ENCODE measurements at regions of chr6 and their contacts with region 1.

Region 1: GRCh38 chr6:149717588-149718458 is at the start of gene LATS1:
- DNase-seq: peak; percentile 94
- H3K4me3 Mint-ChIP-seq: peak within 1 kb of the TSS; percentile 90
- H3K27ac Mint-ChIP-seq: peak within 1 kb of the TSS; percentile 96
- H3K4me1 Mint-ChIP-seq: peaks cover 36% of the 10 kb centered on the region
- H3K27me3 Mint-ChIP-seq: no peaks in the 10 kb centered on the region
- total RNA-seq, gene LATS1: 34.9 to 37.3 TPM

Region 2: GRCh38 chr6:149701714-149702113 is 16.1 kb before region 1 on chr6:
- CTCF ChIA-PET with region 1: interaction called, 10 read pairs
- POLR2A ChIA-PET with region 1: interaction called, 3 read pairs
- DNase-seq: no peak
- H3K4me3 Mint-ChIP-seq: no peak overlapping the region
- H3K27ac Mint-ChIP-seq: no peak overlapping the region
- H3K4me1 Mint-ChIP-seq: peaks cover 29% of the 10 kb centered on the region
- H3K27me3 Mint-ChIP-seq: no peaks in the 10 kb centered on the region

Region 3: GRCh38 chr6:150046943-150047342 is 329.1 kb after region 1 on chr6:
- CTCF ChIA-PET with region 1: no interaction called
- POLR2A ChIA-PET with region 1: no interaction called
- DNase-seq: no peak
- H3K4me3 Mint-ChIP-seq: no peak overlapping the region
- H3K27ac Mint-ChIP-seq: no peak overlapping the region
- H3K4me1 Mint-ChIP-seq: peaks cover 3% of the 10 kb centered on the region
- H3K27me3 Mint-ChIP-seq: peaks cover 40% of the 10 kb centered on the region